Mammary epithelial cell (primary cell): ENCODE measurements at regions of chr4 and their contacts with region 1.

Region 1: GRCh38 chr4:153127760-153128494 is 76.3 kb upstream of the TRIM2 start:
- DNase-seq: peak; percentile 65
- H3K4me3 ChIP-seq: no peak overlapping the region
- H3K27ac ChIP-seq: no peak overlapping the region
- H3K4me1 ChIP-seq: no peaks in the 10 kb centered on the region
- H3K27me3 ChIP-seq: no peaks in the 10 kb centered on the region
- CTCF ChIP-seq: peak; percentile 72 to 81

Region 2: DNA sequence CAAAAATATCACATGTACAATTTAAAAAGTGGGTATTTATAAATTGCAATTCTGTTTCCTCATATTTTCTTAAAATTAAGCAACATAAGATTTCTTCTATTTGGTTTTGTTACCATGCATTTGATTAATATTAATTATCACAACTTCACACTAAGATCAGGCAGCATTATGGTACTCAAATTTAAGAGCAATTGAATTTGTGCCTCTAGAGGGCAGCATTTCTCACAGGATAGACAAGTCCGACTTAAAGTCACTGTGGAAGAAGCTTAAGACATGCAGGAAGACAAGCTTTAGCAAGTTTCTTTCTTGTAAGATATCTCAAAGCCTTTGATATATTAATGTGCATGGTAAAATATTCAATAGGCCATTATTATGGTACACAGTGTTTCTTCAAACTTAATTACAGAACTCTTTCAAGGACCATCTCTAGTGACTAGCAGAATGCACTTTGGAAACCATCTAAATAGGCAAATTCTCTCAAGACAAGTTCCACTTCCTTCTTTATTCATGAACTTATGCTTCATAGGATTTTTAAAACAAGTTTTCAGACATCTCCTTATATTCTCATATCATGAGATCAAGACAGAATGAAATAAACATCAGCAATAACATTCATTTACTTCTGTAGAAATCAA is 627.0 kb before region 1 on chr4:
- CTCF ChIA-PET with region 1: no interaction called
- dilution Hi-C with region 1: no loop called
- in situ Hi-C with region 1: no loop called
- intact Hi-C with region 1: loop called (anchors 5 kb)
- DNase-seq: peak; percentile 68
- H3K4me3 ChIP-seq: no peak overlapping the region
- H3K27ac ChIP-seq: no peak overlapping the region
- H3K4me1 ChIP-seq: peaks cover 3% of the 10 kb centered on the region
- H3K27me3 ChIP-seq: no peaks in the 10 kb centered on the region
- CTCF ChIP-seq: peak; percentile 69 to 80

Region 3: GRCh38 chr4:152779513-152780266 is 348.2 kb before region 1 on chr4 and contains the starts of genes ARFIP1 and TIGD4:
- CTCF ChIA-PET with region 1: interaction called, 8 read pairs
- dilution Hi-C with region 1: no loop called
- in situ Hi-C with region 1: no loop called
- intact Hi-C with region 1: loop called (anchors 1 kb)
- DNase-seq: peak; percentile 97
- H3K4me3 ChIP-seq: peak within 1 kb of the TSS; percentile 64 to 80 (median 66)
- H3K27ac ChIP-seq: peak within 1 kb of the TSS; percentile 86
- H3K4me1 ChIP-seq: peaks cover 22% of the 10 kb centered on the region
- H3K27me3 ChIP-seq: no peaks in the 10 kb centered on the region
- CTCF ChIP-seq: peak in 1 of 2 donors; percentile 23
- total RNA-seq, gene ARFIP1: 34.8 to 42.8 TPM
- total RNA-seq, gene TIGD4: 0.50 to 0.71 TPM

Region 4: DNA sequence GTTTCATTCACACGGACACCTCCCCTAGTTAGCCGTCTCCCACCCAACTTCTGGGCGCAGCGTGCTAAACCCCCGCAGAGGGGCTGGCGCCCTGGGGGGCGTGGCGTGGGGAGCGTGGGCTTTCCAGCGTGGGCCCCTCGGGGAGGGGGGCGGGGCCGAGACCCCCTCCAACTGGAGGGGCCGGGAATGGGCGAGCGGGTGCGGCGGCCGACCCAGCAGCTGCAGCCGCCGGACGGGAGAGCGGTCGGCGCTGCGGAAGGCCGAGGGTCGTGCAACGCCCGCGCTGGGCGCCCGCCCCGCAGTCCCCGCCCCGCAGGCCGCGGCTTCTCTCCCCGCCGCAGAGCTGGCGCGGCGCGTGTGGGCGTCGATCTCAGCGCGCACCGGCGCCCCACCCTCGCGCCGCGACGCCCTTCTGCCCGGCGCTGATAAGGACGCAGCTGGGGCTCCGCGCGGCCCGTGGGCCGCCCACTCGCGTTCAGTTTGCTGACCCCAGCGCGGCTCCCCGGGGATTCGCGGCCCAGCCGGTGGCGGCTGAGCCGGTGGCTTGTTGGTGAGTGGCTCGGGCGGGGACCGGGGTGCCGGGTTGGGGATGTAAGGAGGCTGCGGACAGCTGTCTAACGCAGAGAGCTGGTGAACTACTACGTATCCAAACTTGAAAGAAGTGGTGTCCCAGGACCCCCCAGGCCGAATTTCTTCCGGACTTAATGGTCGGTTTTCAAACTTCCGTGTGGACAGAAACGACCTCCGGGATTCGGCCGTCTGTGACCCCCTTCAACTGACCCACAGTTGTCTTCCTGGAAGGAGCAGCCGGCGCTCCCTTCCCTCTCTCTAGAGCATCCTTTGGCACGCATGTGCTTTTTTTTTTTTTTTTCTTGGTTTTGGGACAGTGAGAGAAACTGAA is 190.3 kb before region 1 on chr4:
- CTCF ChIA-PET with region 1: no interaction called
- dilution Hi-C with region 1: no loop called
- in situ Hi-C with region 1: no loop called
- intact Hi-C with region 1: loop called (anchors 1 kb)
- DNase-seq: peak; percentile 58
- H3K4me3 ChIP-seq: peak overlapping the region; percentile 88 to 91 (median 90)
- H3K27ac ChIP-seq: peak overlapping the region; percentile 52
- H3K4me1 ChIP-seq: peaks cover 16% of the 10 kb centered on the region
- H3K27me3 ChIP-seq: no peaks in the 10 kb centered on the region
- CTCF ChIP-seq: no peak

Region 5: GRCh38 chr4:153318696-153319320 is 190.9 kb after region 1 on chr4:
- CTCF ChIA-PET with region 1: no interaction called
- dilution Hi-C with region 1: loop called (anchors 25 kb)
- in situ Hi-C with region 1: no loop called
- intact Hi-C with region 1: no loop called
- DNase-seq: peak; percentile 38
- H3K4me3 ChIP-seq: no peak overlapping the region
- H3K27ac ChIP-seq: no peak overlapping the region
- H3K4me1 ChIP-seq: no peaks in the 10 kb centered on the region
- H3K27me3 ChIP-seq: no peaks in the 10 kb centered on the region
- CTCF ChIP-seq: peak; percentile 73 to 82

Region 6: GRCh38 chr4:154854362-154854761 is 1726.4 kb after region 1 on chr4:
- CTCF ChIA-PET with region 1: no interaction called
- dilution Hi-C with region 1: no loop called
- in situ Hi-C with region 1: no loop called
- intact Hi-C with region 1: no loop called
- DNase-seq: peak; percentile 20
- H3K4me3 ChIP-seq: no peak overlapping the region
- H3K27ac ChIP-seq: no peak overlapping the region
- H3K4me1 ChIP-seq: no peaks in the 10 kb centered on the region
- H3K27me3 ChIP-seq: no peaks in the 10 kb centered on the region
- CTCF ChIP-seq: peak; percentile 32 to 54